Brain microvascular endothelial cell (primary cell): ENCODE measurements at regions of chr22 and their contacts with region 1.

Region 1: DNA sequence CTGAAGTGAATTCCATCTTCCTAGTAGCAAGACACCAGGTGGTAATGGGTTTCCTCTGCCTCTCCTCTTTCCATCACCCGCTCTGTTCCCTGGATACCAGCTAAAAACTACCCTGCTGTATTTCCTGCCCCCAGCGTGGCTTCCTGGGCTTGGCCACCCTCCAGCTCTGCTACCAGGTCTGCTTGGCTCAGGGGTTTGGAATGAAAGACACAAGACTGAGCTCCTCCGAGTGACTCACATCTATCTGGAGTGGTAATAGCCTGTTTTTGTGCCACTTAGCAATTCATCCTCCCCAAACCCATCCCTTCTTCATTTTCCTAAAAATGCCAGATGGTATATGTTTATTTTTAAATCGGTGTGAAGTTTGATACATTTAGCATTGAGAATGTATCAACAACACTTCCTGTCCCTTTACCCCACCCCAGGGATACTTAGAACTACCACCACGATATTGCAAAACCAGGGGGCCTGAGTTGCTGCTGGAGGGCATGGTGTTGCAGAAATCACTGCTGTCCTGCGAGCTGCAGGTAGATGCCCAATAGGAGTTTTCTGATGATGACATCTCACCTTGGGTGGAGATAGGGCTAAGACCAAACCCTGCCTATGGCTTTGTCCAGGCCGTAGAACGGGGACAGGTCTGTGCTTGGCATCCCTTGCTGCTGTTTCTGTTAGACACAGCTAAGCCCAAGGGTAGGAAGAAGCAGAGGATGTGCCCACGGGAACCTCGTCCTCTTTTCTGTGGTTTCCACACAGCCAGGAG is 7.5 kb upstream of the MICAL3 start:
- DNase-seq: peak; percentile 85
- H3K4me3 ChIP-seq: no peak overlapping the region
- H3K27ac ChIP-seq: no peak overlapping the region
- H3K27me3 ChIP-seq: no peaks in the 10 kb centered on the region
- CTCF ChIP-seq: no peak

Region 2: GRCh38 chr22:17884084-17884483 is 147.8 kb before region 1 on chr22:
- in situ Hi-C with region 1: no loop called
- DNase-seq: no peak
- H3K4me3 ChIP-seq: no peak overlapping the region
- H3K27ac ChIP-seq: no peak overlapping the region
- H3K27me3 ChIP-seq: no peaks in the 10 kb centered on the region
- CTCF ChIP-seq: no peak

Region 3: DNA sequence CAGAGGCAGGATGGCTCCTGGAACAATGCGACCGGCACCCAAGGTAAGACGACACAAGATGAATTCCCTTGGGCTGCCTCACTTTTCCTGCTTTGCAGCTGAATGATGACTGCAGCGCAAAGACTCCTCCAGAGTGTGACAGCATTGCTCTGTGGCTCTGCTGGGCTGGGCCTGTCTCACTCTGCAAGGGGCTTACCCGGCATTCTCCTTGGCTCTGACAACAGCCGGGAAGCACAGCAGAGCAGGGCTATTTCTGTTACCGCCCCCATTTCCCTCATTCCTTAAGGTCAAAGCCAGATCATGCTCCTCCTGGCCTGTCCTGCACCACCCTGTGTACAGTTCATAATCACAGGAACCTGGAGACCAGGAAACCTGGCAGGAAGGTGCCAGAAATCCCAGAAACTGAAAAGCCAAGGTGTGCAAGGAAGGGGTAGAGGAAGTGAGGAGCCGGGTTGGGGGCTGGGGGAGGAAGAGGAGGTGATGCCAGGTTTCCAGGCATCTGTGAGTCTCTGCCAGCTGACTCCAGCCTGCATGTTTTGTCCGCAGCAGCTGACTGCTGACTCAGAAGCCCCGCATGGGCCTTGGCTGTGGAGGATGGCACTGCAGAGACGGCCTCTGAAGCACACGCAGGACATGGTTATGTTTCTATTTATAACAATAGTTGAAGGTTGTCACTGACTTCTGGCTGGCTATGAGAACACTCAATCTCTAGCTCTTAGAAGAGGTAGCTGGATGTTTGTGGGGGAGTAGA is 121.1 kb before region 1 on chr22:
- in situ Hi-C with region 1: loop called (anchors 25 kb)
- DNase-seq: peak; percentile 83
- H3K4me3 ChIP-seq: no peak overlapping the region
- H3K27ac ChIP-seq: peak overlapping the region; percentile 79
- H3K27me3 ChIP-seq: no peaks in the 10 kb centered on the region
- CTCF ChIP-seq: peak; percentile 69

Region 4: DNA sequence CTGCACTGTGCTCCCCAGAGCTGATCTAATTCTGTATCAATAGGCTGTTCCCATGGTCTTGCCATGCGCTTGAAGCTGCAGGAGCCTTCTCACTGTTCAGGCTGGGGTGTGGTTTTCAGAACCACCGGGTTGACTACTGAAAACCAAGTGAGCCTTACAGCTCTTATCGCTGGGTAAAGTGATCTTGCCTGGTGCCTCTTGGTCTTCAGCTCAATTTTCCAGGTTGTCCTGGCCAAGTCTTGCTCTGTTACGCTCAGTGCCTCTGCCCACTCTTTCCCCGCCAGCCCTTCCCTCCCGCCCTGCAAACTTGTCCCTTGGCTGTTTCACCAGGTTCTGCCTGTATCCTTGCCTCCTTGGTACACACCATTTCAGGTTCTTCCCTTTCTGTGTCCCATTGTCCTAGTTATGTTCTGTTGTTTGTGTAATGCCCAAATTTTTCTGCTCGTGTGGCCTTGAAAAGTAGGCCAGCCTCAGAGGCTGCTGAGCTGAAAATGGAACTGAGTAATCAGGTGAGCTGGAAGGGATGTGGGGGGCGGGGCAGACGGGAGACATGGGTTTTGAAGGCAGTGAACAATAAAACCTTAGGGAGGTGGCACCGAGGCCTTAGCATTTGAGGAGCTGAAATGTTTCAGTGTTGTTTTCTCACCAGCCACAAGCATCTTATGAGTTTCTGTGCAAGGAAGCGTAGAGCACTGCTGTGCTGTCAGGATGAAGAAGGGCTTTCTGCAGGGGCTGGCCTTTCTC is 57.1 kb after region 1 on chr22:
- in situ Hi-C with region 1: no loop called
- DNase-seq: no peak
- H3K4me3 ChIP-seq: no peak overlapping the region
- H3K27ac ChIP-seq: no peak overlapping the region
- H3K27me3 ChIP-seq: no peaks in the 10 kb centered on the region
- CTCF ChIP-seq: no peak

Region 5: GRCh38 chr22:18119409-18120110 is 87.7 kb after region 1 on chr22:
- in situ Hi-C with region 1: no loop called
- DNase-seq: no peak
- H3K4me3 ChIP-seq: no peak overlapping the region
- H3K27ac ChIP-seq: no peak overlapping the region
- H3K27me3 ChIP-seq: no peaks in the 10 kb centered on the region
- CTCF ChIP-seq: no peak